ENCODE measurements at regions of chr11 and their contacts with region 1.

Region 1: GRCh38 chr11:66686801-66687750 is 9.4 kb upstream of the RBM4B start:
- DNase-seq: no peak
- H3K4me3 ChIP-seq: no peak overlapping the region
- H3K27ac ChIP-seq: peak overlapping the region; percentile 72
- H3K4me1 ChIP-seq: peaks cover 15% of the 10 kb centered on the region
- H3K27me3 ChIP-seq: no peaks in the 10 kb centered on the region
- CTCF ChIP-seq: no peak
- POLR2A ChIP-seq: no peak

Region 2: DNA sequence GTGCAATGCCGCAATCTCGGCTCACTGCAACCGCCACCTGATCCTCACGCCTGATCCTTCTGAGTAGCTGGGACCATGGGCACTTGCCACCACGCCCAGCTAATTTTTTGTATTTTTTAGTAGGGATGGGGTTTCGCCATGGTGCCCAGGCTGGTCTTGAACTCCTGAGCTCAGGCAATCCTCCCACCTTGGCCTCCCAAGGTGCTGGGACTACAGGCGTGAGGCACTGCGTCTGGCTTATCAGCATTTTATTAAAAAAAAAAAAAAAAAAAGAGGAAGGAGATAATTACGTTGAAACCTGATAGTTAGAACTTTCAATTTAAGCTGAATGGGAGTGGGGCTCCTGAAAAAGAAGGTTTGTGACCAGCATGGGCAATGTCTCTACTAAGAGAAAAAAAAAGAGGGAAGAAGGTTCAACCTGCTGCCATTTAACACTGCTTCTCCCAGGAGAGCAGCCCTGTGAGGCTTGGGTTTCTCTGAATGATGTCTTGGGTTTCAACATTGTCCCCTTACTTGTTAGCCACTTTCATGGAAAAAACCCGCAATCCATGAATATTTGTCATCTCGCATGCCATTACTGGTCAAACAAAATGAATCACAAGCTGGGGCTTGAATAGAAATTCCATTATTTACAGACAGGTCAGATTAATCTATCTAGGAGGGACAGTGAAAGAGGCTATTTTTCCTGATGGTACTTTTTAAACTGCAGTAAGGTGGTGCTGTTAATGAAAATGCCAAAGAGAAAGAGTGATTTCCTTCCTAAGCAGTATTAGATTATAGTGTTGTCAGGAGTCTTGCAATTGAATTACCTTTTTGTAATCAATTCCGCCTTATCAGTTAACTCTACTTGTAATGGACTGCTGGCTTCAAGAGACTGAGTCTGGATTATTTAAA is 544.5 kb before region 1 on chr11:
- intact Hi-C with region 1: no loop called
- DNase-seq: no peak
- H3K4me3 ChIP-seq: no peak overlapping the region
- H3K27ac ChIP-seq: no peak overlapping the region
- H3K4me1 ChIP-seq: no peaks in the 10 kb centered on the region
- H3K27me3 ChIP-seq: no peaks in the 10 kb centered on the region
- CTCF ChIP-seq: no peak
- POLR2A ChIP-seq: no peak

Region 3: DNA sequence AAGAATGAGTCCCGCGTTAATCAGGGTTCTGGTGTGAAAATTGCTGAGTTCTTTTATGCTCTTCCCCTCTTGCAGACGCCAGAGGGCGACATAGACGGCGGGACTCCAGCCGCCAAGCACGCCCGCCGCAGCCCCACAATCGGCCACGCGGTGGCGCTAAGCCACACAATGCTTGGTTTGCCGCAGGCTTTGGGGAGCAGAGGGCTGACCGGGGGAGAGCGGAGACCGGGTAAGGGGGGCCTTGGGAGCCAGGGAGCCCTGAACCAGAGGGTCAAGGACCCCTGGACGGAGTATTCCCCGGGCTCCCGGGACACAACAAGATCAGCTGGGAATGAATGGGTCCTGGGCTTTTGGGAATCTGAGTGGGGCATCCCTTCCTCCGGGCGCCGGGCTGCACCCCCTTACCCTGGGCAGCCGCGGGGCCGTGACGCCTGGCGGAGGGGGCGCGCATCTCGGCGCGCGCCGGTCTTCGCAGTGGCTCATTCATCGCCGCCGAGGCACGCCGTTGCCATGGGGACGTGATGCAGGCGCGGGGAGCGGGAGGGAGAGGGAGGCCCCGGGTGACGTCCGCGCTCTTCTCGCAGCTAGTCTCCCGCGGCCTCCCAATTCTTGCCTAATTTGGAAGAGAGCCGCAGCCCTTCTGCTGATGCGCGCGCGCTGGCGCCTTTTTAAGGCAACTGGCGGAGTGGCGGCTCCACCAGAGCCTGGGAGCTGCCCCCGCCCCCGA is 278.4 kb before region 1 on chr11:
- intact Hi-C with region 1: loop called (anchors 10 kb)
- DNase-seq: no peak
- H3K4me3 ChIP-seq: peak overlapping the region; percentile 30 to 37
- H3K27ac ChIP-seq: peak overlapping the region; percentile 70
- H3K4me1 ChIP-seq: peaks cover 10% of the 10 kb centered on the region
- H3K27me3 ChIP-seq: no peaks in the 10 kb centered on the region
- CTCF ChIP-seq: peak; percentile 99 to 100 (median 100)
- POLR2A ChIP-seq: no peak

Region 4: DNA sequence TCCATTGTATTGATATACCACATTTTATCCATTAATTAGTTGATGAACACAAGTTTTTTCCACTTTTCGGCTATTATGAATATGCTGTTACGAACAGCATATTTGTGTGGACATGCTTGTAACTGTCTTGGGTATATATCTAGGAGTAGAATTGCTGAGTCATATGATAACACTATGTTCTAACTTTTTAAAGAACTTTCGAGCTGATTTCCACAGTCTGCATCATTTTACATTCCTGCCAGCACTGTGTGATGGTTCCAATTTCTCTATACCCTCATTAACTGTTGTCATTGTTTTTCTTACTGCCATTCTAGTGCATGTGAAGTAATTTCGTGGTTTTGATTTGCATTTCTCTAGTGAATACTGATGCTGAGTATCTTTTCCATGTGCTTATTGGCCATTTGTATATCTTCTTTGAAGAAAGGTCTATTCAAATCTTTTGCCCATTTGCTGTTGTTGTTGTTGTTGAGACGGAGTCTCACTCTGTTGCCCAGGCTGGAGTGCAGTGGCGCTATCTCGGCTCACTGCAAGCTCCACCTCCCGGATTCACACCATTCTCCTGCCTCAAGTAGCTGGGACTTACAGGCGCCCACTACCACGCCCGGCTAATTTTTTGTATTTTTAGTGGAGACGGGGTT is 148.8 kb after region 1 on chr11:
- intact Hi-C with region 1: loop called (anchors 5 kb)
- DNase-seq: no peak
- H3K4me3 ChIP-seq: no peak overlapping the region
- H3K27ac ChIP-seq: no peak overlapping the region
- H3K4me1 ChIP-seq: no peaks in the 10 kb centered on the region
- H3K27me3 ChIP-seq: no peaks in the 10 kb centered on the region
- CTCF ChIP-seq: no peak
- POLR2A ChIP-seq: no peak